Activated CD8-positive, alpha-beta memory T cell treated with anti-CD3 and anti-CD28 coated beads, Interleukin-2, amount 10 ng/mL, durations not matched to agents 7 days and 5 days (primary cell): ENCODE measurements at regions of chr11 and their contacts with region 1.

Region 1: GRCh38 chr11:65418711-65419459 is 3.7 kb upstream of the NEAT1 start:
- DNase-seq: peak; percentile 98
- ATAC-seq: peak; percentile 42
- H3K4me3 Mint-ChIP-seq: peak overlapping the region; percentile 94
- H3K27ac Mint-ChIP-seq: peak overlapping the region; percentile 98
- H3K4me1 Mint-ChIP-seq: peaks cover 53% of the 10 kb centered on the region
- H3K27me3 Mint-ChIP-seq: peaks cover 2% of the 10 kb centered on the region

Region 2: DNA sequence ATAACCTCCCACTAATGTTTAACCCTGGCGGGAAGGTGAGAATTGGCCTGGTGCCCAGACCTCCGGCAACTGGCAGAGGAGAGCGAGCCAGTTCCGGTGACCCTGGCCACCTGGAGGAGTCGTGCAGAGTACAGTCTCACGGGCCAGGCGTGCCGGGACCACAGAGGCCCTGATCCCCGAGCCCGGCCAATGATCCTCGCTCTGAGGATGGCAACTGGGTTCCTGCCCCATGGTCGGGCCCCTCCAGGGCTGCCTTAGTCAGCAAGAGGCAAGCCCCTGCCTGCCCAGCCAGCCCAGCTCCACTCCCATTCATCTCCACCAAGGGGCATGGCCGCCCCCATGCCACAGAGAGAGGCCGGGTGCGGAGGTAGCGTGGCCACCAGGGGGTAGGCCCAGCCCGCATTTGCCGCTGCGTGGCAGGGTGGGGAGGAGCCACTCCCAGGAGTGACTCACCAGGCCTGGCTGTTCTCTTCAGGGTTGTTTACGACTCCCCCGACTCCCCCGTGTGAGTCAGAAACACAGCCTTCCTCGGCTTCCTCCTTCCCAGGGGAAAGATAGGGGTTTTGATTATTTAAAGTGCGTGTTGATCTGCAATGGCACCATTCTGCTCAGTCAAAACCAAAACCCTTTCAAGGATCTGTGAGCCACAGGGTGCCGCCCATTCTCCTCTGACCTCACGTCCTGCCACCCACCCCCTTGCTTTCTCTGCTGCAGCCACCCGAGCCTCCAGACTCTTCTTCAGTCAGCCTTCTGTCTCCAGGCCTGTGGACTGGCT is 36.7 kb before region 1 on chr11 and contains the start of gene SLC25A45:
- CTCF ChIA-PET with region 1: interaction called, 19 read pairs
- DNase-seq: peak; percentile 94
- ATAC-seq: peak; percentile 84
- H3K4me3 Mint-ChIP-seq: peak within 1 kb of the TSS; percentile 80
- H3K27ac Mint-ChIP-seq: peak within 1 kb of the TSS; percentile 98
- H3K4me1 Mint-ChIP-seq: peaks cover 51% of the 10 kb centered on the region
- H3K27me3 Mint-ChIP-seq: no peaks in the 10 kb centered on the region
- total RNA-seq, gene SLC25A45: 19.4 to 25.1 TPM

Region 3: GRCh38 chr11:65429724-65430405 is 11.0 kb after region 1 on chr11:
- CTCF ChIA-PET with region 1: interaction called, 24 read pairs
- DNase-seq: peak; percentile 76
- ATAC-seq: peak; percentile 5
- H3K4me3 Mint-ChIP-seq: peak overlapping the region; percentile 73
- H3K27ac Mint-ChIP-seq: peak overlapping the region; percentile 98
- H3K4me1 Mint-ChIP-seq: peaks cover 81% of the 10 kb centered on the region
- H3K27me3 Mint-ChIP-seq: no peaks in the 10 kb centered on the region

Region 4: GRCh38 chr11:65471410-65471762 is 52.5 kb after region 1 on chr11:
- CTCF ChIA-PET with region 1: interaction called, 80 read pairs
- DNase-seq: no peak
- ATAC-seq: peak; percentile 2
- H3K4me3 Mint-ChIP-seq: no peak overlapping the region
- H3K27ac Mint-ChIP-seq: peak overlapping the region; percentile 91
- H3K4me1 Mint-ChIP-seq: peaks cover 31% of the 10 kb centered on the region
- H3K27me3 Mint-ChIP-seq: no peaks in the 10 kb centered on the region

Region 5: DNA sequence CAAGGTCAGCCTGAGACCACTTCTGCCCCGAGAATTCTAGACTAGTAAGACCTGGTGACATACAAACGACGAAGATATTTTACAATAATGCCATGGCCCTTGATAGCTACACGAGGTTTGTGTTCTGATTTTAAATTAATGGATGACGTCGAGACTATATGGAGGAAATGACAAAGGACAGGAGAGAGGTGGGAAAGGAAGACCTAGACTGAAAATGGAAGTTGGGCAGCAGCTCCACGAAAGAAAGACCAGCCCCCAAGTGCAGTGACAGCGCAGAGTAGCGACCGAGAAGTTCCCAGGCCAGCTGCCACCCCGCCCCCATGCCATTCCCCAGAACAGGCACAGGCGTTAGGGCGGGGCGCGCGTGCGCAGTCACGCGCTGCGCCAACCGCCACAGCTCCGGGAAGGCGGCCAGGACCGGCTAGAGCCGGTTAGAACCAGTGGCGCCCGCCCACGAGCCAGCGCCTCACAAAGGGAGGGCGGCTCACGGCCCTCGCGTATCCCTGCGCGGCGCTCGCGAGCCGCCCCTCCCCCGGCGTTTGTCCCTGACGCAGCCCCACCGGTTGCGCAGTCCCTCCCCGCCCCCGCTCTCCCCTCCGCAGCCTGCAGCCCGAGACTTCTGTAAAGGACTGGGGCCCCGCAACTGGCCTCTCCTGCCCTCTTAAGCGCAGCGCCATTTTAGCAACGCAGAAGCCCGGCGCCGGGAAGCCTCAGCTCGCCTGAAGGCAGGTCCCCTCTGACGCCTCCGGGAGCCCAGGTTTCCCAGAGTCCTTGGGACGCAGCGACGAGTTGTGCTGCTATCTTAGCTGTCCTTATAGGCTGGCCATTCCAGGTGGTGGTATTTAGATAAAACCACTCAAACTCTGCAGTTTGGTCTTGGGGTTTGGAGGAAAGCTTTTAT is 78.5 kb after region 1 on chr11:
- CTCF ChIA-PET with region 1: interaction called, 489 read pairs
- DNase-seq: peak; percentile 99
- ATAC-seq: peak; percentile 77
- H3K4me3 Mint-ChIP-seq: no peak overlapping the region
- H3K27ac Mint-ChIP-seq: no peak overlapping the region
- H3K4me1 Mint-ChIP-seq: peaks cover 34% of the 10 kb centered on the region
- H3K27me3 Mint-ChIP-seq: peaks cover 6% of the 10 kb centered on the region

Region 6: DNA sequence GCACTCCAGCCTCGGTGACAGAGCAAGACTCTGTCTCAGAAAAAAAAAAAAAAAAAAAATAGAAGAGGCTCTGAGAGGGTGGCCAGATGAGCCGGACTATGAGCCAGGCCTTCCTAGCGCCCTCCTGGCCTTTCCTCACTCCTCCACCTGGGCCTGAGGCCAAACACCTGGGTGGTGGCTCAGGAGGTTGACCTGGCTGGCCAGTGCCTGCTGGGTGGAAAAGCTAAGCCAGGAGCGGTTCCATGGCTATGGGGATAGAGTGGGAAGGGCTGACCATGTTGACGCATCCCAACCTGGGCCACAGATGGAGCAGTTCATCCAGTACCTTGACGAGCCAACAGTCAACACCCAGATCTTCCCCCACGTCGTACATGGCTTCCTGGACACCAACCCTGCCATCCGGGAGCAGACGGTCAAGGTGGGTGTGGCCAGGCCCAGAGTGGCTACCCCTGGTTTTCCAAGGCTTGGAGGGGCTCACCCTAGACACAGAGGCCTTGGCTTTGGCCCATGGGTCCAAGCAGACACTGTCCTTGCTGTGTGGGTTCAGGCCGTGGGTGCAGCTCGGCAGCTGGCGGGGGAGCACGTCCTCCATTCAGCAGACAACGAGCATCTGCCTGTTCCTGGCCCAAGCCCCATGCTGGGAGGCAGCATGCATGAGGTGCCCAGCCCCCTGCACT is 113.6 kb after region 1 on chr11:
- CTCF ChIA-PET with region 1: no interaction called
- DNase-seq: peak; percentile 39
- ATAC-seq: no peak
- H3K4me3 Mint-ChIP-seq: no peak overlapping the region
- H3K27ac Mint-ChIP-seq: no peak overlapping the region
- H3K4me1 Mint-ChIP-seq: peaks cover 8% of the 10 kb centered on the region
- H3K27me3 Mint-ChIP-seq: no peaks in the 10 kb centered on the region

Region 7: GRCh38 chr11:65569973-65570918 is 151.4 kb after region 1 on chr11 and contains the start of gene ZNRD2:
- CTCF ChIA-PET with region 1: no interaction called
- DNase-seq: peak; percentile 100
- ATAC-seq: peak; percentile 74
- H3K4me3 Mint-ChIP-seq: peak within 1 kb of the TSS; percentile 100
- H3K27ac Mint-ChIP-seq: peak within 1 kb of the TSS; percentile 98
- H3K4me1 Mint-ChIP-seq: peaks cover 66% of the 10 kb centered on the region
- H3K27me3 Mint-ChIP-seq: no peaks in the 10 kb centered on the region
- total RNA-seq, gene ZNRD2: 42.1 to 45.5 TPM